ENCODE measurements at regions of chr1 and their contacts with region 1.

Region 1: GRCh38 chr1:65449214-65449842 is 28.9 kb downstream of the LEPR start:
- DNase-seq: no peak
- ATAC-seq: no peak
- H3K4me3 ChIP-seq: no peak overlapping the region
- H3K27ac ChIP-seq: no peak overlapping the region
- H3K4me1 ChIP-seq: no peaks in the 10 kb centered on the region
- H3K27me3 ChIP-seq: no peaks in the 10 kb centered on the region
- CTCF ChIP-seq: no peak
- EP300 ChIP-seq: no peak
- POLR2A ChIP-seq: no peak
- RAD21 ChIP-seq: no peak

Region 2: GRCh38 chr1:64757213-64757612 is 692.1 kb before region 1 on chr1:
- CTCF ChIA-PET with region 1: no interaction called
- POLR2A ChIA-PET with region 1: interaction called, 10 read pairs
- RAD21 ChIA-PET with region 1: no interaction called
- SMC1A ChIA-PET with region 1: no interaction called
- in situ Hi-C with region 1: no loop called
- intact Hi-C with region 1: no loop called
- DNase-seq: no peak
- ATAC-seq: no peak
- H3K4me3 ChIP-seq: no peak overlapping the region
- H3K27ac ChIP-seq: no peak overlapping the region
- H3K4me1 ChIP-seq: no peaks in the 10 kb centered on the region
- H3K27me3 ChIP-seq: no peaks in the 10 kb centered on the region
- CTCF ChIP-seq: no peak
- EP300 ChIP-seq: no peak
- POLR2A ChIP-seq: no peak
- RAD21 ChIP-seq: no peak

Measured in GM12878 (cell line).